ENCODE measurements at regions of chr2 and their contacts with region 1.

Region 1: GRCh38 chr2:10493636-10494281 is 45.6 kb upstream of the ODC1 start:
- DNase-seq: peak; percentile 99
- ATAC-seq: peak; percentile 85
- H3K4me3 ChIP-seq: no peak overlapping the region
- H3K27ac ChIP-seq: peak overlapping the region; percentile 97
- H3K4me1 ChIP-seq: peaks cover 30% of the 10 kb centered on the region
- H3K27me3 ChIP-seq: no peaks in the 10 kb centered on the region
- CTCF ChIP-seq: no peak

Region 2: DNA sequence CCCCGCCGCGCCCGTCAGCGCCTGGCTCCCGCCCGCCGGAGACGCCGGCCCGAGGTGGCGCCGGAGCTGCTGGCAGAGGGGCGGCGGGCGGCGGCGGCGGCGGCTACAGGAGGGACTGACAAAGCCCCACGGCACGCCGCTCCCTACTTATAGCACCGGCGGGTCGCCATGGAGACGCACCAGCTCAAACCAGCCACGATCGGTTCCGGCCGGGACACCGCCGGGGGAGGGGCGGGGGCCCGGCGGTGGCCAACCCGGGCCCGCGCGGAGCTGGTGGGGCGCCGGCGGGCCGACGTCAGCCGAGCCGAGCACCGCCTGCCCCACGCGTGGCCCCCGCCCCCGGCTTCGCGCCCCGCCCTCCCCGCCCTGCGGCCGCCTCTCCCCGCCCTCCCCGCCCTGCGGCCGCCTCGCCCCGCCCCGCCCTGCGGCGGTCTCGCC is 45.5 kb before region 1 on chr2 and contains the start of gene ODC1:
- CTCF ChIA-PET with region 1: interaction called, 4 read pairs
- POLR2A ChIA-PET with region 1: interaction called, 20 read pairs
- intact Hi-C with region 1: loop called (anchors 1 kb)
- DNase-seq: peak; percentile 97
- ATAC-seq: peak; percentile 66
- H3K4me3 ChIP-seq: peak within 1 kb of the TSS; percentile 94
- H3K27ac ChIP-seq: peak within 1 kb of the TSS; percentile 92
- H3K4me1 ChIP-seq: peaks cover 51% of the 10 kb centered on the region
- H3K27me3 ChIP-seq: no peaks in the 10 kb centered on the region
- CTCF ChIP-seq: no peak
- total RNA-seq, gene ODC1: 712 and 714 TPM in 2 replicates

Region 3: GRCh38 chr2:10514743-10515142 is 21.0 kb after region 1 on chr2:
- CTCF ChIA-PET with region 1: no interaction called
- POLR2A ChIA-PET with region 1: no interaction called
- intact Hi-C with region 1: loop called (anchors 2 kb)
- DNase-seq: peak; percentile 97
- ATAC-seq: peak; percentile 98
- H3K4me3 ChIP-seq: no peak overlapping the region
- H3K27ac ChIP-seq: peak overlapping the region; percentile 85
- H3K4me1 ChIP-seq: peaks cover 18% of the 10 kb centered on the region
- H3K27me3 ChIP-seq: no peaks in the 10 kb centered on the region
- CTCF ChIP-seq: no peak

Region 4: GRCh38 chr2:10575609-10576280 is 82.0 kb after region 1 on chr2:
- CTCF ChIA-PET with region 1: no interaction called
- POLR2A ChIA-PET with region 1: no interaction called
- intact Hi-C with region 1: loop called (anchors 2 kb)
- DNase-seq: peak; percentile 94
- ATAC-seq: peak; percentile 91
- H3K4me3 ChIP-seq: 0 out of 2 replicates have a peak overlapping the region, but pooled peaks have one; percentile 3
- H3K27ac ChIP-seq: peak overlapping the region; percentile 97
- H3K4me1 ChIP-seq: peaks cover 27% of the 10 kb centered on the region
- H3K27me3 ChIP-seq: no peaks in the 10 kb centered on the region
- CTCF ChIP-seq: no peak

Region 5: GRCh38 chr2:10659898-10660568 is 166.3 kb after region 1 on chr2:
- CTCF ChIA-PET with region 1: no interaction called
- POLR2A ChIA-PET with region 1: no interaction called
- intact Hi-C with region 1: loop called (anchors 5 kb)
- DNase-seq: peak; percentile 85
- ATAC-seq: peak; percentile 52
- H3K4me3 ChIP-seq: no peak overlapping the region
- H3K27ac ChIP-seq: peak overlapping the region; percentile 83
- H3K4me1 ChIP-seq: peaks cover 43% of the 10 kb centered on the region
- H3K27me3 ChIP-seq: no peaks in the 10 kb centered on the region
- CTCF ChIP-seq: peak; percentile 89

Measured in PC-3 (cell line).